ENCODE measurements at regions of chr3 and their contacts with region 1.

Region 1: DNA sequence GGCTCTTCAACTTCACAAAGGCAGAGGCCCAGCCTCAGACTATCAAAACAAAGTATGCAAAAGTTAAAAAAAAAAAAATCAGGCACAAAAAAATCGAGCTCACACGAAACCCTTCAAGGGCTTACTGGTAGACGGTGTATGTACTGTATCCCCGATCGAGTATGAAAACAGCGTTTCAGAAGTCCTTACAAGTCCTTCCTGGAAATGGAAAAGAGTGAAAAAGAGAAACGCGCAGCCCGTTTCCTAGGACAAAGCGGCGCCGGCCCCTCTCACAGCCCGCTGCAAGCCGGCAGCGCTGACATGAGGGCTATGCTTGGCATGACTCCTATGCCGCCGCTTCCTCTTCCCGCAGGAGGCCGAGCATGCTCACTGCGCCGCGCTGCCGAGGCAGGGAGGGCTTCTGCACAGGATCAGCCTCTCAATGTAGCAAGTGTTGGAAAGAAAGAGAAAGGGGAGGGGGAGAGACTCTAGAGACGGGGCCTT is at the start of gene VGLL4:
- DNase-seq: peak; percentile 85
- H3K4me3 Mint-ChIP-seq: peak within 1 kb of the TSS; percentile 93
- H3K27ac Mint-ChIP-seq: peak within 1 kb of the TSS; percentile 96
- H3K4me1 Mint-ChIP-seq: peaks cover 21% of the 10 kb centered on the region
- H3K27me3 Mint-ChIP-seq: no peaks in the 10 kb centered on the region
- CTCF ChIP-seq: no peak
- total RNA-seq, gene VGLL4: 31.3 and 31.7 TPM in 2 replicates

Region 2: GRCh38 chr3:10467904-10468612 is 1175.6 kb before region 1 on chr3:
- CTCF ChIA-PET with region 1: no interaction called
- POLR2A ChIA-PET with region 1: no interaction called
- intact Hi-C with region 1: no loop called
- DNase-seq: peak; percentile 42
- H3K4me3 Mint-ChIP-seq: no peak overlapping the region
- H3K27ac Mint-ChIP-seq: no peak overlapping the region
- H3K4me1 Mint-ChIP-seq: no peaks in the 10 kb centered on the region
- H3K27me3 Mint-ChIP-seq: peaks cover 29% of the 10 kb centered on the region
- CTCF ChIP-seq: no peak

Region 3: DNA sequence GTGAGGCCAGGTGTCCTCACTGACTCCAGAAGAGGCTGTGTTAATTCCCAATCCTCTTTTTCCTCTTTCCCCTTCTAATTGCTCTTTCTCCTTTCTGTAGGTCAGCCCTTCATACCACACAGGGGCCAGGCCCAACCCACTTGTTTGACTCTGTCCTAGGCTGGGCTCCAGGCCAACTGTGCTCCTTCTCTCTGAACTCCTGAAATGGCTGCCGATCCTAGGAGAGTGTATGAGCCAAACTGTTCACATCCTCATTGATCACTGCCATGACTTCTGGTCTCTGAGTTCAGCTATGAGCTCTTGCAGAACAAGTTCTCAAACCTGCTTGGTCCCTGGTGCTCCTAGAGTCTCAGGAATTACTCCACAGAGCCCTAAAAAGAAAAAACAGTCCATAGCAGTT is 145.0 kb before region 1 on chr3:
- CTCF ChIA-PET with region 1: no interaction called
- POLR2A ChIA-PET with region 1: no interaction called
- intact Hi-C with region 1: loop called (anchors 5 kb)
- DNase-seq: peak; percentile 86
- H3K4me3 Mint-ChIP-seq: no peak overlapping the region
- H3K27ac Mint-ChIP-seq: peak overlapping the region; percentile 13
- H3K4me1 Mint-ChIP-seq: peaks cover 13% of the 10 kb centered on the region
- H3K27me3 Mint-ChIP-seq: no peaks in the 10 kb centered on the region
- CTCF ChIP-seq: no peak

Region 4: GRCh38 chr3:11568503-11569155 is 75.0 kb before region 1 on chr3:
- CTCF ChIA-PET with region 1: interaction called, 6 read pairs
- POLR2A ChIA-PET with region 1: interaction called, 7 read pairs
- intact Hi-C with region 1: loop called (anchors 1 kb)
- DNase-seq: peak; percentile 86
- H3K4me3 Mint-ChIP-seq: peak overlapping the region; percentile 76
- H3K27ac Mint-ChIP-seq: peak overlapping the region; percentile 99
- H3K4me1 Mint-ChIP-seq: peaks cover 27% of the 10 kb centered on the region
- H3K27me3 Mint-ChIP-seq: no peaks in the 10 kb centered on the region
- CTCF ChIP-seq: no peak

Region 5: GRCh38 chr3:11764931-11765363 is 121.3 kb after region 1 on chr3:
- CTCF ChIA-PET with region 1: no interaction called
- POLR2A ChIA-PET with region 1: no interaction called
- intact Hi-C with region 1: no loop called
- DNase-seq: peak; percentile 75
- H3K4me3 Mint-ChIP-seq: peak overlapping the region; percentile 59
- H3K27ac Mint-ChIP-seq: peak overlapping the region; percentile 88
- H3K4me1 Mint-ChIP-seq: peaks cover 12% of the 10 kb centered on the region
- H3K27me3 Mint-ChIP-seq: no peaks in the 10 kb centered on the region
- CTCF ChIP-seq: no peak